Motor neuron (in vitro differentiated cells): ENCODE measurements at regions of chr12 and their contacts with region 1.

Region 1: DNA sequence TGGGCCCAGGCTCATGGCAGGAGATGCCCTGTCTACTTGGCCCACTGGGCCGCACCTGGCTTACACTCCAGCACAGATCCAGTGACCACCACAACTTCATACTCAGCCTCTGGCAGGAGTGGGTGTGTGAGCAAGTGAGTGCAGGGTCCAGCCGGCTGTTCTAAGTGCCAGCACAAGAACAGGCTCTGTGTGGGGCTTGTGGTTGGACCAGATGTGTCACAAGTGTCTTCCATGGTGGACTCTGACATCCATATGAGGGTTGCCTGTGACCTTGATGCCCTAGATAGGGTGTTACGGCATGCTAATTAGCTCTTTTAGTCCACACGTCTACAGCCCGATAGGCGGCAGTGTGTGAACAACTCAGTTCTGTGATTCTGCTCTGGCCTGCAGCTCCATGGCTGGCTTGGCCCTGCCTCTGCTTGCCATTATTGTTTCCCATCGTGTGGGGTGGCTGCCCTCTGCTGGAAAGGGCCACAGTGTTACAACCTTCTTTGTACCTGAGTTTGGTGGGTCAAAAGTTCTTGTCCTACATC is 1089.1 kb downstream of the SLC6A15 start:
- ATAC-seq: peak; percentile 62 to 88 (median 70)
- H3K4me3 ChIP-seq: no peak overlapping the region
- H3K27ac ChIP-seq: no peak overlapping the region
- H3K4me1 ChIP-seq: peaks cover 0 to 5% of the 10 kb centered on the region in 2 donors

Region 2: GRCh38 chr12:83016218-83016835 is 807.2 kb before region 1 on chr12:
- in situ Hi-C with region 1: loop called in 1 of 9 experiments (anchors 25 kb)
- ATAC-seq: peak in 5 of 8 experiments; percentile 56 to 98 (median 76)
- H3K4me3 ChIP-seq: no peak overlapping the region
- H3K27ac ChIP-seq: no peak overlapping the region
- H3K4me1 ChIP-seq: peaks cover 4 to 12% of the 10 kb centered on the region in 2 donors

Region 3: DNA sequence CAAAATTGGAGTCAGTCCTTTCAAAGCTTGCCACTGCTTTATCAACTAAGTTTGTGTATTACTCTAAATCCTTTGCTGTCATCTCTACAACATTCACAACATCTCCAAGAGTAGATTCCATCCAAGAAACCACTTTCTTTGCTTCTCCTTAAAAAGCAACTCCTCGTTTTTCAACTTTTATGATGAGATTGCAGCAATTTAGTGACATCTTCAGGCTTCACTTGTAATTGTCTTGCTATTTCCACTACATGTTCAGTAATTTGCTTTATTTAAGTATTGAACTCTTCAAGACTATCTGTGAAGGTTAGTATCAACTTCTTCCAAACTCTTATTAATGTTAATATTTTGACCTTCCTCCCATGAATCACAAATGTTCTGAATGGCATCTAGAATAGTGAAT is 388.9 kb before region 1 on chr12:
- in situ Hi-C with region 1: loop called in 1 of 9 experiments (anchors 25 kb)
- ATAC-seq: no peak
- H3K4me3 ChIP-seq: no peak overlapping the region
- H3K27ac ChIP-seq: no peak overlapping the region
- H3K4me1 ChIP-seq: no peaks in the 10 kb centered on the region

Region 4: DNA sequence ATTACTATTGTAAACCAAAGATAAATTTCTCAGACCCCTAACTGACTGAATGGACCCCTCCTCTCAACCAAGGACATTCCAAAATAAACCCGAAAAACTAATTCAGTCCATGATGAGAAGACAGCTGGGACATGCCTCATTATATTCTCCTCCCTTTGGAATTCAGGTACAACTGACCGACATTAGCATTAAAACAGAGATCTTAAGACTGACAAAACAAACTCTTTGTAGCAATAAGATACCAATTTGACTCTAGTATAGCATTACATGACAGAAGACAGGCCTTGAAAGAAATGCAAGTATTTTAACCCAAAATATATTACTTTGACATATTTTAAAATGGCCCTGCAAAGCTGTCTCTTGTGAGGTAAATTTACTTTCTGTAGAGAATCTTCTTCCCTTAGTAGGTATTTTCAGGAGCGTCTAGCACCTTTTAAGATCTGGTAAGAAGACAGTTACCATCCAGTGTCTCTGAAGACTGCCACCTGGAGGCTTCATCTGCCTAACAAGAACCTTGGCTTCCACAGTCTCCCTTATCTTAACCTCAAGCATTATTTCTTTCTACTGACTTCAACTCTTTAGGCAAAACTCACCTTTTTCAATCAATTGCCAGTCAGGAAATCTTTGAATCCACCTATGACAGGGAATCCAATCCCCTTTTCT is 131.6 kb after region 1 on chr12:
- in situ Hi-C with region 1: loop called in 1 of 9 experiments (anchors 25 kb)
- ATAC-seq: no peak
- H3K4me3 ChIP-seq: no peak overlapping the region
- H3K27ac ChIP-seq: no peak overlapping the region
- H3K4me1 ChIP-seq: no peaks in the 10 kb centered on the region

Region 5: GRCh38 chr12:84397263-84397662 is 573.8 kb after region 1 on chr12:
- in situ Hi-C with region 1: loop called in 1 of 9 experiments (anchors 25 kb)
- ATAC-seq: no peak
- H3K4me3 ChIP-seq: no peak overlapping the region
- H3K27ac ChIP-seq: no peak overlapping the region
- H3K4me1 ChIP-seq: no peaks in the 10 kb centered on the region

Region 6: DNA sequence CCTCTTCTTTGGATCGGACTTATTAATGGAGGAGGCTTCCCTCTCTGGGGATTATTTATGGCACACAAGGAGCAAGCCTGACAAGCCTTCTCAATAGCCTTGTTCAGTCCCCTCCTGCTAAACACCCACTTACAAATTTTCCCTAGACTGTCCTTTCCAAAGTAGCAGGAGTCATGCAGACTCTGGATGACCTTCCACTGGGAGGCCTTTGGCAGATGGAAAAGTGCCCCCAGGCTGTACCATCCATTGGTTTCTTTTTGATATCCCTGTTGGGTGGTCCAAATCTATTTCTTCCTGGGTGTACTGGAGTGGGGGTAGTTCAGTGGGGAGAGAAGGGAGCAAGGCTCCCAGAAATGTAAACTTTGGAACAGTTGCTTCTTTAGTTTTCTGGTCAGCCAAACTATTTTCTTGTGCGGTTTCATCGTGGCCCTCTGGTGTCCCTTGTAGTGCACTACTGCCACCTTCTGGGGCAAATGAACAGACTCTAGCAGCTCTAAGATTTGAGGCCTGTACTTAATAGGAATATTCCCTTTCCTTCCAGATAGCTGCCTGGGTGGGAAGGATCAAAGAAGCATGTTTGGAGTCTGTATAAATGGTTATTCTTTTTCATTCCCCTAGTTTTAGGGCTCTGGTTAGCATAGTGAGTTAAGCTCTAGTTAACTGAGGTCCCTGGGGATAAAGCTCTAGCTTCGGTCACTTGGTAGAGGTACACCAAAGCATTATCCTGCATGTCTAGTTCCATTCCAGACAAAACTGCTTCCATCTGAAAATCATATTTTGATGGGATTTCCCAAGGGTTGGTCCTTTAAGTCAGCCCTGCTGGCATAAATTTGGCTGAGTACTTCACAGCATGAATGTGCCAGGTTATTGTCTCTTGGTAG is 679.6 kb after region 1 on chr12:
- in situ Hi-C with region 1: loop called in 1 of 9 experiments (anchors 10 kb)
- ATAC-seq: peak in 4 of 8 experiments; percentile 13 to 98 (median 90)
- H3K4me3 ChIP-seq: no peak overlapping the region
- H3K27ac ChIP-seq: no peak overlapping the region
- H3K4me1 ChIP-seq: peaks cover 0 to 6% of the 10 kb centered on the region in 2 donors